ENCODE measurements at regions of chr2 and their contacts with region 1.

Region 1: GRCh38 chr2:84925724-84926376 is 20.4 kb downstream of the TMSB10 start:
- DNase-seq: peak; percentile 99
- H3K4me3 Mint-ChIP-seq: peak overlapping the region; percentile 86
- H3K27ac Mint-ChIP-seq: peak overlapping the region; percentile 90
- H3K4me1 Mint-ChIP-seq: peaks cover 64% of the 10 kb centered on the region
- H3K27me3 Mint-ChIP-seq: no peaks in the 10 kb centered on the region

Region 2: DNA sequence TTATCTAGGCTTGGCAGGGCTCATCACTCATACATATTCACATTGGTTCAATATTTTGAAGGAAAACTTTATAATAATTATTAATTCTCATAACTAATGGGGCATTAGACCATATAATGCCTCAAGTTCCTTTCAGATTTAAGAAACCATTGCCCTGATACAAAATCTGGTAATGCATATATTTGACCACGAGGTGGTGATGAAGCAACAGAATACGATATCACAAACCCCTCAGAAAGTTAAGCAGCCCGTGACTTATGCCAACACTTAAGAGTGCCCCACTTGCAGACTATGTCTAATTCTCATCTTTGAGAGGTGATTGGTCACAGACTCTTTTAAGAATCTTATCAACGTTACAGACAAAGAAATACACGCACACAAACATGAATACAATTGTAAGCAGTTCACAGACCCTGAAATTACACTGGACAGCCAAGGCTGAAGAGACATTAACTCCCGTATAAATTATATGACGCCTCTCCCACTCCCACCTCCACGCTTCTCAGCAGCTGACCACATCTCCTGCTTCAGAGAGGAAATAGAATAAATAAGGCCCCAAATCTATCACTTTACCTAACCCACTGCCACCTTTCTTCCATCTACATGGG is 430.2 kb before region 1 on chr2:
- CTCF ChIA-PET with region 1: interaction called, 26 read pairs
- DNase-seq: peak; percentile 47
- H3K4me3 Mint-ChIP-seq: no peak overlapping the region
- H3K27ac Mint-ChIP-seq: no peak overlapping the region
- H3K4me1 Mint-ChIP-seq: peaks cover 6% of the 10 kb centered on the region
- H3K27me3 Mint-ChIP-seq: peaks cover 6% of the 10 kb centered on the region

Region 3: DNA sequence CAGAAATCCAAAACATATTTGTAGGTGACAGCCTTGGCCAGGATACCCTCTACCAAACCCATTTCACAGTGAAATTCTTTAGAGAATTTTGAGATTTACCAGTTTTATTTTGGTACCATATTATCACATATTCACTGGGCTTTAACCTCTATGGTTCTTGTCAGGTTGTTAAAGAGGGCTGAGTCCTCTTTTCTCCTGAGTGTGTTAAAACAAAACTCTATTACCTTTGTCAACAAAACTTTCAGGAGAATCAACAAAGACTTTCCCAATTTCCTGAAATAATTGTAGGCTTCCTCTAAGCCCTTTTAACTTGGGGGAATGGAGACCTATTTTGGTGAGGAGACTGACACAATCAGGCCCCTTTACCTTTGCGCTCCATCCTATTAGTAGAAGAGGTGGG is 200.1 kb before region 1 on chr2:
- CTCF ChIA-PET with region 1: no interaction called
- DNase-seq: no peak
- H3K4me3 Mint-ChIP-seq: no peak overlapping the region
- H3K27ac Mint-ChIP-seq: no peak overlapping the region
- H3K4me1 Mint-ChIP-seq: peaks cover 17% of the 10 kb centered on the region
- H3K27me3 Mint-ChIP-seq: no peaks in the 10 kb centered on the region

Region 4: DNA sequence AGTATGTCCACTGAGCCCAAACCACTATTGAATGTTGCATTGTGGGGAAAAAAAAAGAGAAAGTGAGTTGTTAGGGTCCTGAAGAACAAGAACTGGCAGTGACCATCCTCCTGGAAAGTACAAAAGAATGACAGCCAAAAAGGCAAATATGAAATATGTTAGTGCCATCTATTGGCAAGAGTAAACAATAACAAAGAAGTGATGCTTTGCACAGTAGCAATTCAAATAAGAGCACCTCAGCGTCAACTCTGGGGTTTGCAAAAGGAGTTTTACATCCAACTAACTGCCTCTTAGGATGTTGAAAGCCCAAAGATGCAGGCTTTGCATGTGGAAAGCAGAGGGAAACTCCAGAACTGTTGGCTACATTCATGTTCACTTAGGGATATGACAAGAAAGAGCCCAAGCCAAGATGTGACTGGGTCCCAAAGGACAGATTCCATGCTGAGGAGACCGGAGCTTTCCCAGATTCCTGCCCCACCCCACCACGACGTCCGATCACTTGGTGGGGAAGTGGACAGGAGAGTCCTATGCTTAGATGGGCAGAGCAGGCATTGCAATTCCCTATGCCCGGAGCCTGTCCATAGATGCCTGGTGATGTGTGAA is 60.6 kb before region 1 on chr2:
- CTCF ChIA-PET with region 1: interaction called, 32 read pairs
- DNase-seq: peak; percentile 23
- H3K4me3 Mint-ChIP-seq: no peak overlapping the region
- H3K27ac Mint-ChIP-seq: peak overlapping the region; percentile 65
- H3K4me1 Mint-ChIP-seq: peaks cover 88% of the 10 kb centered on the region
- H3K27me3 Mint-ChIP-seq: no peaks in the 10 kb centered on the region

Region 5: DNA sequence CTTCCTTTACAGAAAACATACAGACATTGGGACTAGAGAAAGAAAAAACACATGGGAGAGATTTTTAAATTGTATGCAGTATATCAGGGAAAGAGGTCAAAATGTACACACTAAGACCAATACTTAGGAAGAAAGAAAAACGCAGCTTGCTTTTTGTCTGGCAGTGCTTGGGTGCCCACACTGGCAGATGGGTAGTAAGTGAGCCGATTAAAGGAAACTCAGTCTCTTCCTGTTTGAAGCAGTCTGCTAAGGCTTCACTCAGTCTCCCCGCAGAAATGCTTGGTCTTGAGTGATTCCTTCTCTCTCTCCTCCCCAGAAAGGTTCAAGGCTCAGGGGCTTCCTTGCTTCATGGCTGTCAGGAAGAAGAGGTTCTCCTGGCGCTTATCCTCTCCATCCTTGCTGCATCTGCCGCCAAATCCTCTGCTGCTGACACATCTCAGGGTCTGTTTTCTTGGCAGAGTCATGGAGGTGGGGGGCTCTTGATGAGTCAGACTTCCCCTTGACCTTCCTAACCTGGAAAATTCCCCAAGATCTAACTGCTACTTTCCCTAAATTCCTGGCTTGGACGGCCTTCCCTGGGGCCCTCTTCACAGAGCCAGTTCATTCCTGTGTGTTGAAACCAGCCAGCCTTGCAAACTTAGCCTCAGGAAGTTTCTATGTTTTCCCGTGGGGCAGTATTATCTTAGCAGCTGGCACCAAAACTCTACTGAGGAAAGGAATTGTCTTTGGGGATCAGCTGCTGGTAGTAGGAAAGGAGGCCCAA is 30.9 kb before region 1 on chr2:
- CTCF ChIA-PET with region 1: interaction called, 54 read pairs
- DNase-seq: peak; percentile 46
- H3K4me3 Mint-ChIP-seq: peak overlapping the region; percentile 59
- H3K27ac Mint-ChIP-seq: peak overlapping the region; percentile 66
- H3K4me1 Mint-ChIP-seq: peaks cover 73% of the 10 kb centered on the region
- H3K27me3 Mint-ChIP-seq: no peaks in the 10 kb centered on the region

Region 6: DNA sequence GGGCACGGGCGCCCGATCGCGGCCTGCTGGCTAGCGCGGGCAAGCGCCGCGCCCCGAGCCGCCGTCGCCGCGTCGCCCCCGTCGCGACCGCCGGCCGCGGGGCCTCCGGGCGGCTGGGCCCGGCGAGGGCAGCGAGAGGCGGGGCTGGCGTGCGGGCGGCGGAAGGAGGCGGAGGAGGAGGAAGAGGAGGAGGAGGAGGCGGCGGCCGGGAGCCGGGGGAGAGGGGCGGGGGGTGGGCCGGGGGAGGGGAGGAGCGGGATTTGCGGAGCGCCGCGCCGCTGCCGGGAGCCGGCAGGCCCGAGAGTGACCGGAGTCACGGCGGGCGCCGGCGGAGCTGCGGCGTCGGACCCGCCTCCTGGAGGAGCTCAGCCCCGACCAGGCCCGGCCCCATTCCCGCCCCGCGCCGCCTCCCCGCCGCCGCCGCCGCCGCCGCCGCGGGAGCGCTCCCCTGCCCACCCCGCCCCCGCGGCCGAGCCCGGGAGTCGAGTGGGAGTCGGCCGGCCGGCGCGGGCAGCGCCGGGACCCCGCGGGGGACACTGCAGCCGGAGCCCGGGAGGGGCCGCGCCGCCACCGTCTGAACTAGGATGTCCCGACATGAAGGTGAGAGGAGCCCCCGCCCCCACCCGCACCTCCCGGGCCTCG is 45.1 kb after region 1 on chr2 and contains the start of gene KCMF1:
- CTCF ChIA-PET with region 1: interaction called, 24 read pairs
- DNase-seq: peak; percentile 82
- H3K4me3 Mint-ChIP-seq: peak within 1 kb of the TSS; percentile 95
- H3K27ac Mint-ChIP-seq: peak within 1 kb of the TSS; percentile 100
- H3K4me1 Mint-ChIP-seq: peaks cover 51% of the 10 kb centered on the region
- H3K27me3 Mint-ChIP-seq: no peaks in the 10 kb centered on the region

Region 7: GRCh38 chr2:85282914-85283313 is 357.1 kb after region 1 on chr2:
- CTCF ChIA-PET with region 1: interaction called, 32 read pairs
- DNase-seq: no peak
- H3K4me3 Mint-ChIP-seq: no peak overlapping the region
- H3K27ac Mint-ChIP-seq: no peak overlapping the region
- H3K4me1 Mint-ChIP-seq: peaks cover 17% of the 10 kb centered on the region
- H3K27me3 Mint-ChIP-seq: peaks cover 8% of the 10 kb centered on the region

Measured in activated naive CD4-positive, alpha-beta T cell treated with anti-CD3 and anti-CD28 coated beads, Interleukin-2, amount 10 ng/mL, durations not matched to agents 7 days and 5 days (primary cell).